Activated B cell treated with CpG ODN at 0.5 μM for 24 hours (primary cell): ENCODE measurements at regions of chr7 and their contacts with region 1.

Region 1: GRCh38 chr7:95545078-95545498 is 51.2 kb downstream of the PDK4 start:
- DNase-seq: no peak
- ATAC-seq: no peak
- H3K4me3 Mint-ChIP-seq: no peak overlapping the region
- H3K27ac Mint-ChIP-seq: no peak overlapping the region
- H3K4me1 Mint-ChIP-seq: peaks cover 9% of the 10 kb centered on the region
- H3K27me3 Mint-ChIP-seq: no peaks in the 10 kb centered on the region
- CTCF ChIP-seq: no peak

Region 2: DNA sequence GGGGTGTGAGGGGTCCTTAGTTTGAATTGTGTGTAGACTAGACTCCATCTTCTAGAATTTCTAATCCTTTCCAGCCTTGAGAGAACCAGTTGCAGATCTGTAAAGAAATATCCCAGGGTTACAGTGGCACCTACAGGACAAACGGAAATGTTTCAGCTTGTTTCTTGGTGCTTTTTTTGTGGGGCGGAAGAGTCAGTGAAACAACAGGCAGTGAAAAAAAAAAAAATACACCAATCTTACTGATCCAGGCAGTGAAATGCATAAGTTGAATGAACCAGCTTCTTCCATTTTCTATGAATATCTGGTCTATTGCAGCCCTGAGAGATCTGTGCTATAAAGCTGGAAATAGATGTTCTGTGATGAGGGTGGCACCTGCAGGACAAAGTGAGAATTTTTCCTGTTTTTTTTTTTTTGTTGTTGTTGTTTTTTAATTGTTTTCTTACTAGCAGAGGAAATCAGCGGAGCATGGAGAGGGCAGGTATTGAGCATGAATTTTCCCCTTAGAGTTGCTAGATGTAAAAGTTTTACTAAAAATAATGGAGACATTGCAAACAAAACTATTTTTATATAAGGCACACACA is 145.4 kb after region 1 on chr7:
- CTCF ChIA-PET with region 1: interaction called, 47 read pairs
- POLR2A ChIA-PET with region 1: no interaction called
- intact Hi-C with region 1: no loop called
- DNase-seq: no peak
- ATAC-seq: peak; percentile 72
- H3K4me3 Mint-ChIP-seq: peak overlapping the region; percentile 2
- H3K27ac Mint-ChIP-seq: no peak overlapping the region
- H3K4me1 Mint-ChIP-seq: peaks cover 4% of the 10 kb centered on the region
- H3K27me3 Mint-ChIP-seq: peaks cover 3% of the 10 kb centered on the region
- CTCF ChIP-seq: peak; percentile 87